ENCODE measurements at regions of chr15 and their contacts with region 1.

Region 1: GRCh38 chr15:100341662-100342560 is at the start of gene ADAMTS17:
- DNase-seq: peak; percentile 85 to 96 (median 94)
- ATAC-seq: peak; percentile 93 to 95 (median 94)
- H3K4me3 ChIP-seq: peak within 1 kb of the TSS; percentile 54 to 60
- H3K4me3 Mint-ChIP-seq: peak within 1 kb of the TSS; percentile 69 to 73 (median 73)
- H3K27ac ChIP-seq: no peak within 1 kb of the TSS
- H3K27ac Mint-ChIP-seq: no peak within 1 kb of the TSS
- H3K4me1 ChIP-seq: peaks cover 0 to 22% of the 10 kb centered on the region in 2 experiments
- H3K4me1 Mint-ChIP-seq: peaks cover 15 to 24% (median 23%) of the 10 kb centered on the region in 3 donors
- H3K27me3 ChIP-seq: peaks cover 2 to 17% of the 10 kb centered on the region in 2 experiments
- H3K27me3 Mint-ChIP-seq: peaks cover 0 to 4% of the 10 kb centered on the region in 2 donors
- total RNA-seq, gene ADAMTS17: 8.9 to 17.8 (median 11.6) TPM

Region 2: DNA sequence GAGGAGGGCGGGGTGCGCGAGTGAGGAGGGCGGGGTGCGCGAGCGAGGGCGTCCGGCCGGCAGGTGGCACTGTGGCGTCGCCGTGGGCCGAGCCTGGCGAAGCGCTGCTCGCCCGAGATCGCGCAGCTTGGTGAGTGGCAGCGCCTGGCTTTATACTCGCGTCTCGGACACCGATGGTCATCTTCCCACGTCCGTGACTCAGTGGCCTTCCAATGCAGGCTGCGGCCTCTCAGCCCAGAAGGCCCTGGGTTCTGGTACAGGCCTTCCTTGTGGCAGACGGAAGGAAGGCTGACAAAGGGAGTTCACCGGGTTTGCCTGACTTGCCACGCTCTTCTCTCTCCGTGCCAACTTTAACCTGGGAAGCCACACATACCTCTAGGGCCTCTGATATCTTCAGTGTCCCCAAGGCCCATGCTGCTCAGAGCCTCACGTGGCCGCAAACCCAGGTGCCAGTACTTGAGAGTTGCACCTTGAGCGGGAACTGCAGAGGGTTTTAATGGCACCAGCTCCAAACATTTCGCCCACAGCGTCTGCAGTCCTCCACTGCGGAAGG is 413.4 kb before region 1 on chr15:
- CTCF ChIA-PET with region 1: interaction called, 6 to 19 read pairs
- POLR2A ChIA-PET with region 1: no interaction called
- DNase-seq: peak; percentile 67 to 96 (median 82)
- ATAC-seq: peak; percentile 87 to 92 (median 89)
- H3K4me3 ChIP-seq: peak overlapping the region; percentile 58 to 62
- H3K4me3 Mint-ChIP-seq: peak overlapping the region; percentile 75 to 86 (median 80)
- H3K27ac ChIP-seq: peak overlapping the region; percentile 56
- H3K27ac Mint-ChIP-seq: peak overlapping the region; percentile 92 to 93
- H3K4me1 ChIP-seq: peaks cover 8 to 20% of the 10 kb centered on the region in 2 experiments
- H3K4me1 Mint-ChIP-seq: peaks cover 21 to 24% (median 23%) of the 10 kb centered on the region in 3 donors
- H3K27me3 ChIP-seq: peaks cover 3 to 4% of the 10 kb centered on the region in 2 experiments
- H3K27me3 Mint-ChIP-seq: peaks cover 0 to 9% of the 10 kb centered on the region in 2 donors

Region 3: DNA sequence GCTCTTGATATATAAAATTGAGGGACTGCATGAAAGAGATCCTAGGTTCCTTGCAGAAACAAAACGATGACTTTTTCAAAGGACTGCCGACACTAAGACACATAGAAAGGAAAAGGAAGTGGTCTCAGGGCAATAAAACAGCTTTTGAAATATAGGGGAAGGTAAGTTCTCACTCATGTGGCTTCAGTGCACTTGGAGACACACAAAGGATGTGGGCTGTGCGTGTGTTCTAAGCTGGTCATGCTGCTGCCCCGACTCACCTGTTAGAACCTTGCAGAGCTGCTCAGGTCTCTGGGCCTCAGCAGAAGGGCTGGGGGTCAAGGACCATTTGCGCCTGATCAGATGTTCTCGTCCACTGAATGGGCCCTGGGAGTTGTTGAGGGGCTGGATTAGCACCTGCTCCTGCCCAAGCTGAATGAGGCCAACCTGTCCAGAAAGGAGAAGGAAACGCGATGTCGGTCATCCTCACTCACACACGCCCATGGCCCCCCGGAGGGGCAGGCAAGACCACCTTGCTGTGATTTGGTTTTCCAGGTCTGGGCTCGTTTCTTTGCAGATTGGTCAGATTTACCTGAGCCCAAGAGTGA is 11.2 kb before region 1 on chr15:
- CTCF ChIA-PET with region 1: interaction called, 3 to 50 read pairs
- POLR2A ChIA-PET with region 1: interaction called, 3 to 5 read pairs
- DNase-seq: peak in 32 of 35 experiments; percentile 24 to 71 (median 42)
- ATAC-seq: peak; percentile 94 to 96 (median 95)
- H3K4me3 ChIP-seq: peak overlapping the region; percentile 38 to 64
- H3K4me3 Mint-ChIP-seq: peak overlapping the region; percentile 59 to 80 (median 66)
- H3K27ac ChIP-seq: peak overlapping the region; percentile 58
- H3K27ac Mint-ChIP-seq: peak overlapping the region; percentile 76 to 85
- H3K4me1 ChIP-seq: peaks cover 30 to 71% of the 10 kb centered on the region in 2 experiments
- H3K4me1 Mint-ChIP-seq: peaks cover 81 to 83% (median 83%) of the 10 kb centered on the region in 3 donors
- H3K27me3 ChIP-seq: no peaks in the 10 kb centered on the region
- H3K27me3 Mint-ChIP-seq: peaks cover 0 to 3% of the 10 kb centered on the region in 2 donors

Region 4: DNA sequence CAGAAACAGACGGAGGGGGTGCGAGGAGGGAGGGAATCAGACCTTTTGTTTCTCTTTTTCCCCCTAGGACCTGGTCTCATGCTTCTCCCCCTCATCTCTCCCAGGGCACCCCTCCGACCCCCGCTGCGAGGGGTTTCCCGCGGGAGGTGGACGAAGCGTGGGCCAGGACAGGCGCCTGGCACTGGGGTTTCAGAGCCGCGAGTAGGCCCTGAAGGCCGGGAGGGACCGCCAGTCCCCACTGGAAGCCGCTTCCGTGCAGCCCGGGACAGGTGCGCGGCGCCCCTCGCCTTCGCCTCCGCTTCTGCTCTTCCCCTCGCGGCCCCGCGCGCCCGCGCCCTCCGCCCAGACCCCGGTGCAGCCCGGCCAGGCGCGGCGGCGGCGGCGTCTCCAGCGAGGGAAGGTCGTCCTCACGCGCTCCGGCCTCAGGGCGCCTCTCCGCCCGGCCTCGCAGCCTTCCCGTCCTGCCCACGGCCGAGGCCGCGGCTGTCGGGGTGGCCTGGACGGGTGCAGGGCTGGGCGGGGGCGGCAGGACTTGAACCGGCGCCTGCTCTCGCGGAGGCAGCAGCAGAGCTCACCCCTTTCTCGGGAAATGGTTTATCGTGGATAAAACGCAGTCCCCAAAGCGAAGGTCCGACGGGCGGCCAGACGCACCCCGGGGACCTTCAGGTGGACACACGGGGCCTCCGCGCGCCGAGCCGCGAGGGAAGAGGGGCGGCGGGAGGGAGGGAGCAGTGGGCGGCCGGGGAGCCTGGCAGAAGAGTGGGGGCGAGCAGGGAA is 31.4 kb after region 1 on chr15:
- CTCF ChIA-PET with region 1: no interaction called
- POLR2A ChIA-PET with region 1: no interaction called
- DNase-seq: no peak
- ATAC-seq: peak; percentile 45 to 65 (median 48)
- H3K4me3 ChIP-seq: no peak overlapping the region
- H3K4me3 Mint-ChIP-seq: peak overlapping the region in 1 of 3 donors; percentile 65
- H3K27ac ChIP-seq: no peak overlapping the region
- H3K27ac Mint-ChIP-seq: no peak overlapping the region
- H3K4me1 ChIP-seq: peaks cover 0 to 4% of the 10 kb centered on the region in 2 experiments
- H3K4me1 Mint-ChIP-seq: peaks cover 11 to 14% (median 12%) of the 10 kb centered on the region in 3 donors
- H3K27me3 ChIP-seq: peaks cover 7 to 30% of the 10 kb centered on the region in 2 experiments
- H3K27me3 Mint-ChIP-seq: peaks cover 44 to 52% of the 10 kb centered on the region in 2 donors

Region 5: GRCh38 chr15:100588638-100589242 is 246.8 kb after region 1 on chr15:
- CTCF ChIA-PET with region 1: no interaction called
- POLR2A ChIA-PET with region 1: interaction called in 1 of 2 experiments, 11 read pairs
- DNase-seq: no peak
- ATAC-seq: no peak
- H3K4me3 ChIP-seq: no peak overlapping the region
- H3K4me3 Mint-ChIP-seq: no peak overlapping the region
- H3K27ac ChIP-seq: no peak overlapping the region
- H3K27ac Mint-ChIP-seq: no peak overlapping the region
- H3K4me1 ChIP-seq: peaks cover 5 to 14% of the 10 kb centered on the region in 2 experiments
- H3K4me1 Mint-ChIP-seq: peaks cover 64 to 69% (median 69%) of the 10 kb centered on the region in 3 donors
- H3K27me3 ChIP-seq: no peaks in the 10 kb centered on the region
- H3K27me3 Mint-ChIP-seq: no peaks in the 10 kb centered on the region

Measured in T-cell (primary cell).